ENCODE measurements at regions of chr4 and their contacts with region 1.

Region 1: DNA sequence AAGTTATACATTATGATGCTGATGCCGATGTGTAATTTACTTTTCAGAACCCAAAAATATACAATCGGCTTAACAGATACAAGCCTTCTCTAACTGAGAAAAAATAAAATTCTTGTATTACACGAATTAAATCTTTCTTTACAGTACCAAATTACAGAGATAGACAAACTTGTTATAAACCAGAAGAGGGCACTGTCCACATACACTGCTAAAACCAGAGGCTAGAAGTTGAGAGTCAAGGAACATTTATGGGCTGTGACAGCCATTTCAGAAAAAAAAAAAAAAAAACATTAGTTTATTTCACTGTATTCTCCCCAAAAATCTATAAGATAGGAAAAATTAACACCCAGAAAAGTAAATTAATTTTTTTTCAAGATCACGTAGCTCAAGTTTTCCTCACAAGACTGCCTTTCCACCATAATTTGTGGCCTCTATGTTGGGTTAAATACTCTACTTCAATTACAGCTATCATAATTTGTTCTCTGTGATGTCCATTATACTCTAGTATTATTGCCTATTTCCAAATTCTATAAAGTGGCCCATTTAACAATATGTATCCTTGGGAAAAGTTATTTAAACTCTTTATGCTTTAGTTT is 12.0 kb downstream of the EREG start:
- DNase-seq: no peak
- ATAC-seq: no peak
- H3K4me3 Mint-ChIP-seq: no peak overlapping the region
- H3K27ac Mint-ChIP-seq: no peak overlapping the region
- H3K4me1 Mint-ChIP-seq: no peaks in the 10 kb centered on the region
- H3K27me3 Mint-ChIP-seq: peaks cover 8% of the 10 kb centered on the region

Region 2: DNA sequence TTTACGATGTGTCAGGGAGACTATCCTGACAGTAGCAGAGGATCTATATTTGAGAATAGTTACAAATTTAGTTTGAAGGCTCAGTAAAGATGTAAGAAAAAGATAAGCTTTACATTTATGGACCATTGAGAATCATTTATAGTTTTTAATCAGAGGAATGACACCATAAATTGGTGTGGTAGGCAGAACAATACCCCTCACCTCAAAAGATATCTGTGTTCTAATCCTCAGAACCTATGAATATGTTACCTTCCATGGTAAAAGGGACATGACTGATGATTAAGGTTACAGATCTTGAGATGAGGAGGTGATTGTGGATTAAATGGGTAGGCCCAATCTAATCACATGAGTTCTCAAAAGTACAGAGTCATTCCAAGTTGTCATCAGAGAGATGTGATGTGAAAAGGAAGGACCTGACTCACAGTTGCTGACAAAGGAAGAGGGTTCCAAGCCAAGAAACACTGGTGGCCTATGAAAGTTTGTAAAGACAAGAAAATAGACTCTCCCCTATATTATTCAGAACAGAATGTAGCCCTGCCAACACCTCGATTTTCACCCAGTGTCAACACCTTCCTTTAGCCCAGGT is 15.0 kb after region 1 on chr4:
- CTCF ChIA-PET with region 1: no interaction called
- DNase-seq: no peak
- ATAC-seq: no peak
- H3K4me3 Mint-ChIP-seq: no peak overlapping the region
- H3K27ac Mint-ChIP-seq: no peak overlapping the region
- H3K4me1 Mint-ChIP-seq: no peaks in the 10 kb centered on the region
- H3K27me3 Mint-ChIP-seq: peaks cover 13% of the 10 kb centered on the region

Region 3: GRCh38 chr4:74531963-74532794 is 155.2 kb after region 1 on chr4:
- CTCF ChIA-PET with region 1: interaction called, 10 read pairs
- DNase-seq: no peak
- ATAC-seq: peak; percentile 42
- H3K4me3 Mint-ChIP-seq: no peak overlapping the region
- H3K27ac Mint-ChIP-seq: no peak overlapping the region
- H3K4me1 Mint-ChIP-seq: no peaks in the 10 kb centered on the region
- H3K27me3 Mint-ChIP-seq: peaks cover 16% of the 10 kb centered on the region

Measured in activated CD8-positive, alpha-beta memory T cell treated with anti-CD3 and anti-CD28 coated beads, Interleukin-2, amount 10 ng/mL, durations not matched to agents 7 days and 5 days (primary cell).